Psoas muscle (tissue), 8 donors: ENCODE measurements at regions of chr1 and their contacts with region 1.

Region 1: GRCh38 chr1:78839704-78840277 is 166.7 kb downstream of the ADGRL4 start:
- DNase-seq: no peak
- ATAC-seq: peak in 1 of 4 donors; percentile 67
- H3K4me3 ChIP-seq: no peak overlapping the region
- H3K27ac ChIP-seq: no peak overlapping the region
- H3K4me1 ChIP-seq: no peaks in the 10 kb centered on the region
- H3K27me3 ChIP-seq: no peaks in the 10 kb centered on the region
- CTCF ChIP-seq: peak; percentile 65

Region 2: DNA sequence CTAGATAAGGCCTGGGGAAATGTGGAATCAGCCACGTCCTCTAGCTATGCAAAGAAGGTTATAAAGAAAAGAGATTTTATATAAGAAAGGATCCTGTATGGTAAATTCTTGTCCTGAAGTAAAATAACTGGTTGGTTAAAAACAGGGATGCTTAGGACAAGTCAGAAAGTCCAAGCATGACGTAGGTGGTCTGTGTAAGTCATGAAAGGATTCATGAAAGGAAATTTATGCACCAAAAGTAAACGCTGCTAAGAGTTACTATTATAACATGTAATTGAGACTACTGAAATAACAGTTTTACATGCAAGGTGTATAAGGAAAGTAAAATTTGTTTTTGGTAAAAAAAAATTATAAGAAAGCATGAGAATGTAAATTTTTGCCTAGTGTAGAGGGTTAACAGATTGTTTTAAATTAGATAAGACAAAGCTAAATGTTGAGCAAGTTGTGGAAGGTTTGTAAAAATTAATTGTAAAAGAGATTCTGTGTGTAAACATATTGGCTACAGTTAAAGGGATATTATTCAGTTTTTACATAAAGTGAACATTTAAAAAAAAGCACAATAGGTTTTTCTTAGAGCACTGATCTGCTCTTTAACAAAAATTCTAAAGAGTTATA is 1664.5 kb before region 1 on chr1:
- intact Hi-C with region 1: no loop called
- DNase-seq: no peak
- ATAC-seq: no peak
- H3K4me3 ChIP-seq: no peak overlapping the region
- H3K27ac ChIP-seq: no peak overlapping the region
- H3K4me1 ChIP-seq: no peaks in the 10 kb centered on the region
- H3K27me3 ChIP-seq: no peaks in the 10 kb centered on the region
- CTCF ChIP-seq: no peak

Region 3: DNA sequence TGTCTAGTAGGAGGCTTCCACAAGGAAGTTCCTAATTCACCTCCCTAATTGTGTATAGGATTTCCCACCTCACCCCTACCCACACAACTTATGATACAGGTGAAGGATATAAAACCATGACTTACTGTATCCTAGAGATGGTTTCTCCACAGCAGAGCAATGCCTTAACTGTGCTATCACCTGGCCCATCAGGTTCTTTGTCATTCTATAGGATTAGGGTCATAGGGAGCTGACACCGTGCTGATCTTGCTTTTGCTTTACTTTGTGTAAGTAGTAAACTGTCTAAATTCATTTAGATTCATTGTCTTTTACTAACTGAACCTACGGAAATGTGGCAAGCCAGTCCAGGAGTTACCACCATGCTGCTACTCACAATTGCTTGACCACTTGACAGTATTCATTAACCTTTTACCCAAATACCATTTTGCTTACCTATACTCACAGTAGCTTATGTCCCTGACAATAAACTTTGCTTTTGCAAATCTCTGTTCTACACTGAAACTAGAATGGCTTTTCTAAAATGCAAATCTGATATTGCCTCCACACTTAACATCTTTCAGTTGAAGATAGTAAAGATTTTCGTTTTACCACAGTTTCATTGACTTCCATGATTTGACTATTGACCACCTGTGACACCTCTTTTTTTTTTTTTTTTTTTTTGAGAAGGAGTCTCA is 42.5 kb before region 1 on chr1:
- intact Hi-C with region 1: no loop called
- DNase-seq: no peak
- ATAC-seq: no peak
- H3K4me3 ChIP-seq: no peak overlapping the region
- H3K27ac ChIP-seq: no peak overlapping the region
- H3K4me1 ChIP-seq: no peaks in the 10 kb centered on the region
- H3K27me3 ChIP-seq: no peaks in the 10 kb centered on the region
- CTCF ChIP-seq: no peak

Region 4: DNA sequence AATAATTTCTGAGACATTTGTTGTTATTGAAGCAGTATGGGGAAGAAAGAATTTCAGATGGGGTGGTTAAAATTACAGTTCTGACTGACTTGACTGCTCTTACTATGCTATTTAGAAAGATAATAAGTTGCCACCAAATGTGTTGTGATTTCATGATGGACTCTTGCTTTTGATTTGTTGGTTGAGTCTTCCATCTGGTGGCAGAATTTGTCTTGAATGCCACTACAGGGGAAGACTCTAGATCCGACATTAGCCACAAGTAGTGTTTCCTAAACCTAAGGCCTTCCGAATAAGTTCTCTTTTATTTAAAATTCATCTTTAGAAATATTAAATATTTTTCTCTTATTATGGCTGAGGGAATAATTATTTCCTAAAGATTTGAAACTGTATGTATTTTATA is 357.6 kb after region 1 on chr1:
- intact Hi-C with region 1: loop called in 1 of 2 experiments (anchors 2 kb)
- DNase-seq: no peak
- ATAC-seq: no peak
- H3K4me3 ChIP-seq: no peak overlapping the region
- H3K27ac ChIP-seq: no peak overlapping the region
- H3K4me1 ChIP-seq: no peaks in the 10 kb centered on the region
- H3K27me3 ChIP-seq: no peaks in the 10 kb centered on the region
- CTCF ChIP-seq: peak; percentile 29

Region 5: GRCh38 chr1:79215311-79215710 is 375.5 kb after region 1 on chr1:
- intact Hi-C with region 1: no loop called
- DNase-seq: no peak
- ATAC-seq: no peak
- H3K4me3 ChIP-seq: no peak overlapping the region
- H3K27ac ChIP-seq: no peak overlapping the region
- H3K4me1 ChIP-seq: no peaks in the 10 kb centered on the region
- H3K27me3 ChIP-seq: no peaks in the 10 kb centered on the region
- CTCF ChIP-seq: no peak

Region 6: GRCh38 chr1:79353224-79353623 is 513.4 kb after region 1 on chr1:
- intact Hi-C with region 1: loop called in 1 of 2 experiments (anchors 10 kb)
- DNase-seq: no peak
- ATAC-seq: no peak
- H3K4me3 ChIP-seq: no peak overlapping the region
- H3K27ac ChIP-seq: no peak overlapping the region
- H3K4me1 ChIP-seq: no peaks in the 10 kb centered on the region
- H3K27me3 ChIP-seq: no peaks in the 10 kb centered on the region
- CTCF ChIP-seq: peak; percentile 21